ENCODE measurements at regions of chr10 and their contacts with region 1.

Region 1: DNA sequence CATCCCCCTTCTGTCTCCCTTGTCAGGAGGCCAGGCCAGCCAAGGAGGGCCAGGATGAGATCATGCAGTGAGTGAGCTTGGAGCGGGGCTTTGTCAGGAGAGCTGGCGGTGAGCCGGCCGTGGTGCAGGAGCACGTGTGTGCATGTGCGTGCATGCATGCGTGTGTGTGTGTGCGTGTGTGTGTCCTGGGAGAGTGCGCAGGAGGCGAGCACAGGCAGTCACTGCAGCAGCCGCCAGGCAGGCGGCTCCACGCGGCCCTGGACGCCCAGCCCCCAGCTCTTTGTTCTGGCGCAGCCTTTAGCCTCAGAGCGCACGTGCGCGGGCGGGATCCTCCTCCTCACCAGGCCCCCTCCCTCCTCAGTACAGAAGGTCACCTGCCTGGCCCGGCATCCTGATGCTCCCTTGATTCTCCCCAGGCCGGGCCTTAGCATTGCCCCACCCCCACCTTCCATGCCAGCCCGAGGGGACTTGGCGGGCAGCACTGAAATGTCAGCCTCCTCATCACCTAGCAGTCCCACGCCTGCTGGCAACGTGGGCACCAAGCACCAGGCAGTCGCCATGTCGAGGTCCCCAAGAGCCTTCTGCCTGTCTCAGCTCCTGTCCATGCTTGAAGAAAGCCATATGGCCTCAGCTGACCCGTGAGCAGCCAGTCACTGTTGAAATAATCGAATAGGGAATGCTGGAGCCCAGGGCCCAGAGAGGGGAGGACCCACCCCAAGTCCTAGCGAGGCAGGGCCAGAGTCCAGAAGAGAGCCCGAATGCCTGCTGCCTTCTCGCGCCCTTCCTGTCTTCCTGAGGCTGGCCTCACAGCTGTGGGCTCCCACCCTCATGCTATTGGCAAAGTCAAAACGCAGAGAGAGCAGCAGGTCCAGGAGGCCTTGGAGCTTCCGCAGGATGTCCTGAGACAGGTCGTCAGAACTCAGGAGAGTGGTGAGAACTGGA is 125.9 kb upstream of the PPIF start:
- DNase-seq: peak; percentile 83 to 95 (median 95)
- ATAC-seq: peak; percentile 69 to 70
- H3K4me3 ChIP-seq: no peak overlapping the region
- H3K27ac ChIP-seq: peak overlapping the region; percentile 61
- H3K4me1 ChIP-seq: peaks cover 55% of the 10 kb centered on the region
- H3K27me3 ChIP-seq: no peaks in the 10 kb centered on the region

Region 2: GRCh38 chr10:79073784-79074432 is 147.5 kb before region 1 on chr10:
- intact Hi-C with region 1: no loop called
- DNase-seq: peak; percentile 57 to 89 (median 80)
- ATAC-seq: no peak
- H3K4me3 ChIP-seq: no peak overlapping the region
- H3K27ac ChIP-seq: peak overlapping the region; percentile 90
- H3K4me1 ChIP-seq: peaks cover 53% of the 10 kb centered on the region
- H3K27me3 ChIP-seq: no peaks in the 10 kb centered on the region

Region 3: DNA sequence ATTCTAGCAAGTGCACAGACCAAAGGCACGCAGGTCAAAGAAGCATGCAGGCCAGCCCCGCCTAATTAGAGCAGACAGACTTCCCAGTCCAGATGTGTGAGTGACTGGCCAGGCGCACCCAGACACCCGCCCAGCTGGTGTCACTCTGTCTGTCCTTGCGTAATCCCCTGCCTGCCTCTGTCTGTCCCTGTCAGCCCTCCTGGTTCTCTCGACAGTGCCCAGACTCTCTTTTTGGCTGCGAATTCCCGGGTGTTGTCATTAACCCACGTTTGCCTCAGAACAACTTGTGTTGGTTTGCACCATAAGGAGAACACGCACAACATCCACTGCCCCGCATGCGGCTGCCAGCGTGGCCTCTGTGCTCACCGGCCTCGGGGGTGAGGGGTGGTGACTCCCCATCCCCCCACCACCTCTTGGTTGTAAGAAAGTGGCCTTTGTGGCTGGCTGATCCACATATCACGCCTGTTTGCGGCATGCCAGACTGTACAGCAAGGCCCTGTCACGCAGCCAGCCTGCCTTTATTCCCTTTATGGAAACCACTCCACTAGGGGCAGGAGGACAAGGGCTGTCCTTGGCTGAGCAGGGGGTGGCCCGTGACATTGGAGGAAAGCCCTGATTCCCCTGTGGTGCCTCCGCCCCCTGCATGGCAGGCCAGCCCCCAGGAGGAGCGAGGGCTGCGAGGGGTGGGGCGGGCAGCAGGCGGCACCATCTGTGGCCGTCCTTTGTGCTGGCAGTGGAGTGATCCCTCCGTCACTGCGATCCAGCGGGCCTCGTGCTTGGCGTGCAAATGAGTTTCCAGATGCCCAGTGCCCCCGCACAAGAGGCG is 53.1 kb after region 1 on chr10:
- intact Hi-C with region 1: loop called in 1 of 4 experiments (anchors 5 kb)
- DNase-seq: peak; percentile 89 to 94 (median 94)
- ATAC-seq: peak; percentile 80 to 83
- H3K4me3 ChIP-seq: no peak overlapping the region
- H3K27ac ChIP-seq: peak overlapping the region; percentile 87
- H3K4me1 ChIP-seq: peaks cover 30% of the 10 kb centered on the region
- H3K27me3 ChIP-seq: no peaks in the 10 kb centered on the region

Measured in right cardiac atrium (tissue), 5 donors.